ENCODE measurements at regions of chr13 and their contacts with region 1.

Region 1: GRCh38 chr13:32031025-32031814 is at the start of gene FRY:
- DNase-seq: peak in 1 of 4 experiments; percentile 4
- ATAC-seq: peak; percentile 72
- H3K4me3 ChIP-seq: no peak within 1 kb of the TSS
- H3K27ac ChIP-seq: no peak within 1 kb of the TSS
- H3K4me1 ChIP-seq: peaks cover 0 to 9% of the 10 kb centered on the region in 2 experiments; a peak in 2 of 5 replicates
- H3K27me3 ChIP-seq: peaks cover 4 to 11% of the 10 kb centered on the region in 2 experiments; a peak in 4 of 5 replicates
- CTCF ChIP-seq: no peak
- EP300 ChIP-seq: no peak
- POLR2A ChIP-seq: no peak
- RAD21 ChIP-seq: no peak
- polyA plus RNA-seq, gene FRY: 0.03 to 0.31 TPM

Region 2: DNA sequence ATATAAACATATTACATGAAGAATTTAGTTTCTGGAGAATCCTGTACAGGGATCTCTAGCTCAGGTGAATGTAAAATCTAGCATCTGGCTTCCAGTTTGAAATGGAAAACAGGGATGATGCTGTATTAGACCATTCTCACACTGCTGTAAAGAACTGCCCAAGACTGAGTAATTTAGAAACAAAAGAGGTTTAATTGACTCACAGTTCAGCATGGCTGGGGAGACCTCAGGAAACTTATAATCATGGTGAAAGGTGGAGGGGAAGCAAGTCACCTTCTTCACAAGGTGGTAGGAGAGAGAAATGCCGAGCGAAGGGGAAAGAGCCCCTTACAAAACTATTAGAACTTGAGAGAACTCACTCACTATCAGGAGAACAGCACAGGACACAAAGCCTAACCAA is 524.4 kb after region 1 on chr13:
- CTCF ChIA-PET with region 1: no interaction called
- POLR2A ChIA-PET with region 1: no interaction called
- in situ Hi-C with region 1: loop called (anchors 10 kb)
- intact Hi-C with region 1: no loop called
- DNase-seq: no peak
- ATAC-seq: no peak
- H3K4me3 ChIP-seq: no peak overlapping the region
- H3K27ac ChIP-seq: no peak overlapping the region
- H3K4me1 ChIP-seq: no peaks in the 10 kb centered on the region; a peak in 1 of 5 replicates
- H3K27me3 ChIP-seq: no peaks in the 10 kb centered on the region
- CTCF ChIP-seq: no peak
- EP300 ChIP-seq: no peak
- POLR2A ChIP-seq: no peak
- RAD21 ChIP-seq: no peak